ENCODE measurements at regions of chr1 and their contacts with region 1.

Region 1: DNA sequence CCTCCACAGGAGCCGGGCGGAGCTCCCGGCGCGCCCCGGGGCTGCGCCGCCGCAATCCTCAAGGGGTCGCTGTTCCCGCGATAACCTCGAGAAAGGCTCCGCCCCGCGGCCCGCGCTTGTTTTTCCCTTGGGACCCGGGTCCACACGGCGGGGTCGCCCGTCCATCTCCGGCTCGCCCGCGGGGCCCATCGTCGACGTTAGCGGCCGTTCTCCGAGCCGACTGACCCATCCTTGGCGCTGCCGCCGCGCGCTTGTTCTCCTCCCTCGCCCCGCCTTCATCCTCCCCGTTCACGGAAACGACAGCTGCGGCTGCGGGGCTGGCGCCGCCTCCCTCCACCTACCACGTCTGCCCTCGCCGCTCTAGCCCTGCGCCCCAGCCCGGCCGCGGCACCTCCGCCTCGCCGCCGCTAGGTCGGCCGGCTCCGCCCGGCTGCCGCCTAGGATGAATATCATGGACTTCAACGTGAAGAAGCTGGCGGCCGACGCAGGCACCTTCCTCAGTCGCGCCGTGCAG is at the start of gene SH3GLB1:
- DNase-seq: peak; percentile 96
- total RNA-seq, gene SH3GLB1: 160 TPM

Region 2: DNA sequence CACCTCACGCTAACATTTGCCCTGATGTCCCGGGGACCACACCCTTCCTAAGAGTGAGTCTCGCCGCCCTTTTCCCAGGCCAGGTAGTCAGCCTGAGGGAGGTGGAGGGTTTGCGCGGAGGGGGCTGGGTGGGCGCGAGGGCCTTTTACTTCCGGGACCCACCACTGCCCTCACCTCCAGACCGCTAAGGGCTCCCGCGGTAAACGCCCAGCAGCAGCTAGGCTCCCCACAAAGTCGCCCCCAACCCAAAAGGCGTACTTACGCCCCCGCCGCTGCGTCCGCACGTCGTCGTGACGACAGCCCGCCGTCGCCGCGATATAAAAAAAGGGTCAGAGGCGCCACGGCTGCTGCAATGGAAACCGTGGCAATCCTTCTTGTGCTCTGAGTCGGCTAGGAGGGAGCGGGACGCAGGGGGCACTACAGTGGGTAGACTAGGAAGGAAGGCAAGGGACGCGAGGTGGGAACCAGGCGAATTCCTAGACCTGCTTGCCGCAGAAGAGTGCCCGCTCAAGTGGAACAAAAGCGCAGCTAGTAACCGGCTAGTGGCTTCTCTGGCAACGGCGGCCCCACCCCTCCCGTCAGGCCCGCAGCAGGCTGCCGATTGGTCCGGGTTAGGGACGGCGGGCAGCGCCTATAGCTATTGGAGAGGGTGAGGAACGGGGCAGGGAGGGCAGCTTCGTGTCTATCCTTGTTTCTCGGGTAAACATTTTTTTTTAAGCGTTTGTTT is 308.6 kb before region 1 on chr1 and contains the start of gene ODF2L:
- intact Hi-C with region 1: loop called (anchors 10 kb)
- DNase-seq: peak; percentile 98
- total RNA-seq, gene ODF2L: 12.1 TPM

Region 3: DNA sequence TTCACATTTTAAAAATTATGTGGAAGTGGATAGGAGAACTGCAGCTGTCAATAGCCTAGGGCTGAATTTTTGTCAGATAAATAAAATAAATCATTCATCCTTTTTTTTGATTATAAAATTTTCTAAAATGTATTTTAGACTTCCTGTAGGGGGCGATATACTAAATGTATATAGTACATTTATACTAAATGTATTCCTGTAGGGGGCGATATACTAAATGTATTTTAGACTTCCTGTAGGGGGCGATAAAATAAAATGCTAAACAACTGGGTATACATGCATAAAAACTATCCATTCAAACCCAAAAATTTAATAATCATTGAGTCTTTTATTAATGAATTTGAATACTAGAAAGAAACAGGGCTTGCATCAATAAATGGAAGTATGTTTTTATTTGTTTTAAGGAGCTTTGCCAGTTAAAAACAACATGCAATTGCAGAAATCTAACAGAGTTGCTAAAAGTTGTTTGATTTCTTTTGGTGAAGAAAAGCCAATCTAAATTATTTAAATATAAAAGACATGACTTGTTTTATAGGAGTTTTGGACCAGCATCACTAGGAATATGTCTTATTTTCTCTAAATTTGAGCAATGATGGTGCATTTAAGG is 204.4 kb before region 1 on chr1:
- intact Hi-C with region 1: loop called (anchors 10 kb)
- DNase-seq: no peak

Region 4: GRCh38 chr1:86774305-86775295 is 70.1 kb after region 1 on chr1:
- intact Hi-C with region 1: loop called (anchors 2 kb)
- DNase-seq: peak; percentile 92

Region 5: GRCh38 chr1:86913896-86914634 is 209.6 kb after region 1 on chr1 and contains the start of gene SELENOF:
- intact Hi-C with region 1: loop called (anchors 10 kb)
- DNase-seq: peak; percentile 97
- total RNA-seq, gene SELENOF: 80.7 TPM

Region 6: DNA sequence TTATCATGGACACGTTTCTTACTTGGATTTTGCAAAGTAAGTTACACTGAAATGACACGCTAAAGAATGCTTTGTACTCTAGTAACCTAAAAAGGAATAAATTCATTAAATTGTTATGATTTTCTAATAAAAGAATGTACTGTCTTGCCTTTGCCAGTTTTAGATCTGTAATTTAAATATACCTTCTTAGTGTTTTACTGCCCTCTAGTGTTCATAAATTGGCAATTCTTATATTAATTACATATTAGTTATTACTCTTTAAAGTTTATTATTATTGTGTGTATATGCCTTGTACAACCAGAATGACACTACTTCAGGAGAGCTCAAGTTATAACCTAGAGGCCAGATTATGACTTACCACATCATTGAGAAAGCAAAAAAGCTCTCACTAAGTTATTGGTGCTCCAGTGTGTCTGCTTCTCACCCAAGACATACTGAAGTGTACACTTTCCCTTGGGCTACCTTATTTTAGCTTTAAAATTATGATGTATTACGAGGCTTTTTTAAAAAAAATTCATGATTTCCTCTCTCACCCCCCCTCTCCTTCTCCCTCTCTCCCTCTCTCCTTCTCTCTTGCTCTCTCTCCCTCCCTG is 379.8 kb after region 1 on chr1:
- intact Hi-C with region 1: loop called (anchors 10 kb)
- DNase-seq: no peak